ENCODE measurements at regions of chrX and their contacts with region 1.

Region 1: GRCh38 chrX:41084044-41084892 is 977 bp upstream of the USP9X start:
- DNase-seq: peak; percentile 86
- ATAC-seq: peak; percentile 76
- H3K4me3 ChIP-seq: peak overlapping the region; percentile 93
- H3K27ac ChIP-seq: peak overlapping the region; percentile 97
- H3K4me1 ChIP-seq: no peaks in the 10 kb centered on the region
- H3K27me3 ChIP-seq: no peaks in the 10 kb centered on the region
- CTCF ChIP-seq: 0 out of 6 replicates have a peak, but pooled peaks of 1 of the 3 experiments have one; percentile 2
- EP300 ChIP-seq: peak; percentile 47 to 68
- POLR2A ChIP-seq: peak; percentile 76
- RAD21 ChIP-seq: no peak

Region 2: GRCh38 chrX:40735325-40736169 is 348.7 kb before region 1 on chrX and contains the start of gene MED14:
- CTCF ChIA-PET with region 1: no interaction called
- POLR2A ChIA-PET with region 1: interaction called, 4 read pairs
- RAD21 ChIA-PET with region 1: no interaction called
- SMC1A ChIA-PET with region 1: no interaction called
- in situ Hi-C with region 1: no loop called
- intact Hi-C with region 1: loop called (anchors 2 kb)
- DNase-seq: peak; percentile 73
- ATAC-seq: peak; percentile 92
- H3K4me3 ChIP-seq: peak within 1 kb of the TSS; percentile 86
- H3K27ac ChIP-seq: peak within 1 kb of the TSS; percentile 92
- H3K4me1 ChIP-seq: no peaks in the 10 kb centered on the region; the same call in 1 of the 2 replicates
- H3K27me3 ChIP-seq: no peaks in the 10 kb centered on the region
- CTCF ChIP-seq: peak; percentile 62 to 64 (median 62)
- EP300 ChIP-seq: 0 out of 4 replicates have a peak, but pooled peaks of 1 of the 2 experiments have one; percentile 5
- POLR2A ChIP-seq: peak; percentile 93
- RAD21 ChIP-seq: no peak
- polyA plus RNA-seq, gene MED14: 8.8 to 17.0 TPM

Region 3: DNA sequence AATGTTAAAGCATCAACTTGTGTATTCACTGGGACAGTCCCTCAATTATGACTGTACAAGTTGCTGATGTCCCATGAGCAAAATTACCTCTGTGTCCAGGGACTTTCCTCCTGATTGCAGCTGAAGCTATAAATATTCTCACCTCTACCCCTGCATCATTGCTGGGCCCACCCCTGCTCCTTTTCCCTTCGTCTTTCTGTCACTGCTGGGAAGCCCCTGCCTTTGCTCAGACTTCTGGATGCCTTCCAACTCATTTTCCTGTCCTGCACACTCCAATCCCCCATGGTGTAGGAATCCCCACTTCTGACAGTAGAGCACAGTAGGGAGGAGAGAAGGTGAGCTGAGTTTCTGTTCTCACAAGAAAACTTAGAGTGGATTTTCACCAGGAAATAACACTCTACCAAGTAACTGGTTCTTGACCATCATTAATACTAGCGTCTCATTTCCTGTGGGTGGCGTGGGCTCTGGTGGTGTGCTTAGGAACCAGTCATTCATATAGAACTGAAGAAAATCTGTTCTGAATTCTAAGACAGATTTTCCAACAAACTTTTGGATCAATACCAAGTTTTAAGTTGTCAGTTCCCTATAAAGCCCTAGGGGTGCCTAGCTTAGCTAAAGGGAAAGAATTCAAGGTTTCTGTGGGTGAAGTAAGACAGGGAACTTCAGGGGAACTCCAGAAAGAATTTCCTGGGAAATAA is 212.7 kb before region 1 on chrX:
- CTCF ChIA-PET with region 1: no interaction called
- POLR2A ChIA-PET with region 1: interaction called, 8 read pairs
- RAD21 ChIA-PET with region 1: interaction called, 11 read pairs
- SMC1A ChIA-PET with region 1: interaction called, 3 read pairs
- in situ Hi-C with region 1: no loop called
- intact Hi-C with region 1: loop called (anchors 1 kb)
- DNase-seq: peak; percentile 87
- ATAC-seq: peak; percentile 89
- H3K4me3 ChIP-seq: no peak overlapping the region
- H3K27ac ChIP-seq: peak overlapping the region; percentile 68
- H3K4me1 ChIP-seq: peaks cover 6% of the 10 kb centered on the region; the same call in 1 of the 2 replicates
- H3K27me3 ChIP-seq: no peaks in the 10 kb centered on the region
- CTCF ChIP-seq: peak in 1 of 3 experiments; percentile 27; a peak in 1 of 6 replicates
- EP300 ChIP-seq: peak; percentile 54 to 71; a peak in 2 of 4 replicates
- POLR2A ChIP-seq: no peak
- RAD21 ChIP-seq: peak; percentile 25; the same call in 1 of the 2 replicates

Region 4: DNA sequence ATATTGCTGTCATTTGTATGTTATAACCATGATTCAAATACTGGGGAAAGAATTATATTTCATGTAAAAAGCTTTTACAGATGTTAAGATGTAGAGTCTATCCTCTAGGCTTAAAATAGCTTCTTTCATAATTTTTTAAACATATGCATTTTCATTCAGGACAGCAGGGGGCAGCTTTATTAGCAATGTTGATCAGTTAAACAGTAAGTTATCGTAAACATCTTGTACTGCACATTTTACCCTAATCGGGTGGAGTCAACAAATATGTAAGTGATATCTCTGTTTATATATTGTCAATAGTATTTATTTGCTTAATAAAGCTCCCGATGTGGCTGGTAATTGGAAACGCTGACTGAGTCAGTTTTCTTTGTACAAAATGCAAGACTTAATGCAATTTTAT is 206.4 kb before region 1 on chrX:
- CTCF ChIA-PET with region 1: interaction called, 11 read pairs
- POLR2A ChIA-PET with region 1: interaction called, 8 read pairs
- RAD21 ChIA-PET with region 1: interaction called, 11 read pairs
- SMC1A ChIA-PET with region 1: interaction called, 5 read pairs
- in situ Hi-C with region 1: no loop called
- intact Hi-C with region 1: no loop called
- DNase-seq: no peak
- ATAC-seq: peak; percentile 67
- H3K4me3 ChIP-seq: no peak overlapping the region
- H3K27ac ChIP-seq: no peak overlapping the region
- H3K4me1 ChIP-seq: no peaks in the 10 kb centered on the region
- H3K27me3 ChIP-seq: no peaks in the 10 kb centered on the region
- CTCF ChIP-seq: peak; percentile 24 to 44 (median 29); a peak in 4 of 6 replicates
- EP300 ChIP-seq: no peak
- POLR2A ChIP-seq: no peak
- RAD21 ChIP-seq: peak; percentile 37; the same call in 1 of the 2 replicates

Region 5: GRCh38 chrX:40952855-40953254 is 131.4 kb before region 1 on chrX:
- CTCF ChIA-PET with region 1: no interaction called
- POLR2A ChIA-PET with region 1: interaction called, 3 read pairs
- RAD21 ChIA-PET with region 1: interaction called, 7 read pairs
- SMC1A ChIA-PET with region 1: no interaction called
- in situ Hi-C with region 1: no loop called
- intact Hi-C with region 1: loop called (anchors 5 kb)
- DNase-seq: peak; percentile 26
- ATAC-seq: peak; percentile 84
- H3K4me3 ChIP-seq: 0 out of 2 replicates have a peak overlapping the region, but pooled peaks have one; percentile 25
- H3K27ac ChIP-seq: peak overlapping the region; percentile 22; the same call in 1 of the 2 replicates
- H3K4me1 ChIP-seq: no peaks in the 10 kb centered on the region; the same call in none of the 2 replicates
- H3K27me3 ChIP-seq: no peaks in the 10 kb centered on the region
- CTCF ChIP-seq: no peak
- EP300 ChIP-seq: no peak
- POLR2A ChIP-seq: no peak
- RAD21 ChIP-seq: no peak

Region 6: DNA sequence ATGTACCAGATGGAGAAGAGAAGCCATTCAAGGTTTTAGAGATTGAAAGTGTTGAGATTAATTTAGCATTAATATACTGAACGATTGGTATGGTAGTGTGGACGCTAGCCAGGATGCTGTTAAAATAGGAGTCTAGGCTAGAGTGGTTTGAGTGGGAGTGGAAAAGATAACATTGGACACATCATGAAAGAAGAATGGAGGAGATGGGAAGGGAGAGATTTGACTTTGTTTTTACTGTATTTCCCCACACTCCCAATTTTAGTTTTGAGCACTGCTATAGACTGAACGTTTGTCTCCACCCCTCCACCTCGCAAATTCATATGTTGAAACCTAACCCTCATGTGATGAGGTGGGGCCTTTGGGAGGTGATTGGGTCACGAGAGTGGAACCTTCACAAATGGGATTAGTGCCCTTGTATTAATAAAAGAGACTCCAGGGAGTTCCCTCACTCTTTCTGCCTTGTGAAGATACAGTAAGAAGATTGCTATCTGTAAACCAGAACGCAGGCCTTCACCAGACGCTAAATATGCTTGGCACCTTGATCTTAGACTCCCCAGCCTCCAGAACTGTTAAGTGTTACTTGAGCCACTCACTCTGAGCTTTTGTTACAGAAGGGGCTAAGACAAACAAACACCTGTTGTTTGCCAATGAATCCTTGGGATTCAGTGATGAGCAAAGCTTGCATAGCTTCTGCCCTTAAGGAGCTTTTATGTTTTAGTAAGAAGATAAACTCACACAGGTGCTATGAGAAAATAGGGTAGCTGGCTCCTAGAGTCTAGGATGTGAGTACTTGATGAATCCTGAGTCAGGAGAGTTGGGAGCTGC is 26.7 kb after region 1 on chrX:
- CTCF ChIA-PET with region 1: interaction called, 23 read pairs
- POLR2A ChIA-PET with region 1: interaction called, 16 read pairs
- RAD21 ChIA-PET with region 1: interaction called, 78 read pairs
- SMC1A ChIA-PET with region 1: interaction called, 52 read pairs
- in situ Hi-C with region 1: no loop called
- intact Hi-C with region 1: loop called (anchors 2 kb)
- DNase-seq: no peak
- ATAC-seq: no peak
- H3K4me3 ChIP-seq: no peak overlapping the region
- H3K27ac ChIP-seq: no peak overlapping the region
- H3K4me1 ChIP-seq: peaks cover 4% of the 10 kb centered on the region; the same call in 1 of the 2 replicates
- H3K27me3 ChIP-seq: no peaks in the 10 kb centered on the region
- CTCF ChIP-seq: no peak
- EP300 ChIP-seq: no peak
- POLR2A ChIP-seq: no peak
- RAD21 ChIP-seq: no peak

Region 7: GRCh38 chrX:41333744-41334259 is 249.5 kb after region 1 on chrX and contains the start of gene DDX3X:
- CTCF ChIA-PET with region 1: no interaction called
- POLR2A ChIA-PET with region 1: interaction called, 3 read pairs
- RAD21 ChIA-PET with region 1: no interaction called
- SMC1A ChIA-PET with region 1: no interaction called
- in situ Hi-C with region 1: loop called (anchors 5 kb)
- intact Hi-C with region 1: loop called (anchors 5 kb)
- DNase-seq: peak; percentile 91
- ATAC-seq: peak; percentile 72
- H3K4me3 ChIP-seq: peak within 1 kb of the TSS; percentile 91
- H3K27ac ChIP-seq: peak within 1 kb of the TSS; percentile 99
- H3K4me1 ChIP-seq: peaks cover 10% of the 10 kb centered on the region
- H3K27me3 ChIP-seq: no peaks in the 10 kb centered on the region; a peak in 1 of 4 replicates
- CTCF ChIP-seq: peak; percentile 19 to 37 (median 29); a peak in 5 of 6 replicates
- EP300 ChIP-seq: peak in 1 of 2 experiments; percentile 4; a peak in 1 of 4 replicates
- POLR2A ChIP-seq: no peak; the same call in none of the 2 replicates
- RAD21 ChIP-seq: 0 out of 2 replicates have a peak, but pooled peaks have one; percentile 3
- polyA plus RNA-seq, gene DDX3X: 52.0 to 56.7 TPM

Region 8: DNA sequence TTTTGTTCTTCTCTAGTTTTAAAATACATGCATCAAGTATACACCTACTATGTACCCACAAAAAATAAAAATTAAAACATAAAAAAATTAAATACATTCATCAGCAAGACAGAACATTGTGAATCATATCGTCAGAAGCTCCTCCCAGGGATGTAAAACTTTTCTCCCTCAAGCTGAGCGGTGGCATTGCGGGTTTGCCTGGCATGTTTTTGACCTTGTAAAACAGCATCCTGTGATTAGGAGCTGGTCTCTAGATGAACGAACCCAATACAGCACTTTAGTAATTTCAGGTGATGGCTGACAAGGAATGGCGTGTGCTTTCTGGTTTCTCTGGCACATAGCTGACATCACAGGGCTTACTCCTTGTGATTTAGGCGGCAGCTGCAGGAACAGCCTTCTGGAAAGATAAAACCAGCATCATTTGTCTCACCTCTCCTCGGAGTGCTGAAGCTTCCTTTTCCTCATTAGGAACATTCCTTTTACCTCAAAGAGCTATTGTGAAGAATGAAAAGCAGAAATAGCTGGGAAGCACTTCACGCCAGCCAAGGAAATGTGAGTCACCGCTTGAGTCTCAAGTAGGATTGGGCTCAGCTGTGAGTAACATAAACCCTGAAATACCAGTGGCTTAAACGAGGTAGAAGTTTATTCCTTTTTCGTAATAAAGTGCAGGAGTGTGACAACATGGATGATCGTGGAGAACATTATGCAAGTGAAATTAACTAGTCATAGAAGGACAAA is 407.2 kb after region 1 on chrX:
- CTCF ChIA-PET with region 1: no interaction called
- POLR2A ChIA-PET with region 1: no interaction called
- RAD21 ChIA-PET with region 1: no interaction called
- SMC1A ChIA-PET with region 1: no interaction called
- in situ Hi-C with region 1: no loop called
- intact Hi-C with region 1: no loop called
- DNase-seq: no peak
- ATAC-seq: no peak
- H3K4me3 ChIP-seq: no peak overlapping the region
- H3K27ac ChIP-seq: no peak overlapping the region
- H3K4me1 ChIP-seq: no peaks in the 10 kb centered on the region
- H3K27me3 ChIP-seq: no peaks in the 10 kb centered on the region; a peak in 1 of 4 replicates
- CTCF ChIP-seq: no peak
- EP300 ChIP-seq: no peak
- POLR2A ChIP-seq: no peak
- RAD21 ChIP-seq: no peak